CD4-positive, alpha-beta T cell (primary cell): ENCODE measurements at regions of chr5 and their contacts with region 1.

Region 1: GRCh38 chr5:135466178-135467050 is 14.3 kb upstream of the TIFAB start:
- DNase-seq: peak; percentile 35 to 77 (median 48)
- ATAC-seq: peak; percentile 68
- H3K4me3 ChIP-seq: peak overlapping the region; percentile 14
- H3K4me3 Mint-ChIP-seq: peak overlapping the region; percentile 53
- H3K27ac ChIP-seq: no peak overlapping the region
- H3K27ac Mint-ChIP-seq: no peak overlapping the region
- H3K4me1 ChIP-seq: peaks cover 14% of the 10 kb centered on the region
- H3K4me1 Mint-ChIP-seq: peaks cover 11% of the 10 kb centered on the region
- H3K27me3 ChIP-seq: peaks cover 22 to 26% of the 10 kb centered on the region in 2 experiments
- H3K27me3 Mint-ChIP-seq: peaks cover 67% of the 10 kb centered on the region
- CTCF ChIP-seq: peak; percentile 71

Region 2: GRCh38 chr5:135094339-135095051 is 371.9 kb before region 1 on chr5:
- CTCF ChIA-PET with region 1: no interaction called
- POLR2A ChIA-PET with region 1: no interaction called
- intact Hi-C with region 1: no loop called
- DNase-seq: peak in 1 of 14 experiments; percentile 19
- ATAC-seq: no peak
- H3K4me3 ChIP-seq: no peak overlapping the region
- H3K4me3 Mint-ChIP-seq: no peak overlapping the region
- H3K27ac ChIP-seq: no peak overlapping the region
- H3K27ac Mint-ChIP-seq: no peak overlapping the region
- H3K4me1 ChIP-seq: no peaks in the 10 kb centered on the region
- H3K4me1 Mint-ChIP-seq: no peaks in the 10 kb centered on the region
- H3K27me3 ChIP-seq: peaks cover 0 to 10% of the 10 kb centered on the region in 2 experiments
- H3K27me3 Mint-ChIP-seq: peaks cover 20% of the 10 kb centered on the region
- CTCF ChIP-seq: no peak

Region 3: DNA sequence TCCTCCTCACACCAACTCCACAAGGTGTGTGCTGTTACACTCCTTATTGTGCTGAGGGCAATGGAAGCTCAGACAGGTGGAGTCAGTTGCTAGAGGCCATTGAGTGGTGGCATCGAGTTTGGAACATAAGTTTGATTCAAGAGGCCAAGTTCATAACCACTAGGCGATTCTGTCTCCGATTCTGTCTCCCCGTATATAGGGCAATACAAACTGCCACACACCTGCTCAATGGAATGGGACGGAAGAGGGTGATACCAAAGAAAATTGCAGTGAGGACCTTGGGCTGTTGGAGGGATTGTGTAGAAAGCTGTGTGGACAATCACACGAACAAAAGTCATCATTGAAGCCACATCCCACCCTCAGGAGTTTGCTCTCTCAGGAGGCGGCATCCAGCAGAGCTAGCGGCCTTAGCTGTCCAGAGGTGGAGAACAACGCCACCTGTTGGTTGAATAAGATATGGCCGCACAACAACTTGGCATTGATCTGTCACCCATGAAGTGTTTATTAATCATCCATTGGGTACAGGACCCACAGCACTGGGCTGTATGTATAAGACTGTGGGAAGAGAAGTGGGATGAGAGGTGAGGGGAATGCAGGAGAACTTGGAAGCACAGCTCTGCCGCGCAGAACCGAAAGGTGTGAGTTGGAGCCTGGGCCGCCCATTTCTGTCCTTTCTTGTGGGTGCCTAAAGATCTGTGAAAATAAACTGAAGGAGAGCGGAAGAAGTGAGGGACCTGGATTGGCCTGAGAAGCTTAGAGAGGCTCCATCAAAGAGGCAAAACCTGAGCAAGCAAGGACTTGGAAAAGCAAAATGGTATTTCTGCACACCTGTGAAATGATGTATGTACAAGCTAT is 85.4 kb after region 1 on chr5:
- CTCF ChIA-PET with region 1: interaction called, 6 read pairs
- POLR2A ChIA-PET with region 1: interaction called, 3 read pairs
- intact Hi-C with region 1: loop called (anchors 2 to 5 kb)
- DNase-seq: peak; percentile 7 to 71 (median 32)
- ATAC-seq: peak; percentile 41
- H3K4me3 ChIP-seq: no peak overlapping the region
- H3K4me3 Mint-ChIP-seq: no peak overlapping the region
- H3K27ac ChIP-seq: no peak overlapping the region
- H3K27ac Mint-ChIP-seq: no peak overlapping the region
- H3K4me1 ChIP-seq: no peaks in the 10 kb centered on the region
- H3K4me1 Mint-ChIP-seq: no peaks in the 10 kb centered on the region
- H3K27me3 ChIP-seq: peaks cover 10 to 50% of the 10 kb centered on the region in 2 experiments
- H3K27me3 Mint-ChIP-seq: peaks cover 82% of the 10 kb centered on the region
- CTCF ChIP-seq: peak; percentile 66

Region 4: DNA sequence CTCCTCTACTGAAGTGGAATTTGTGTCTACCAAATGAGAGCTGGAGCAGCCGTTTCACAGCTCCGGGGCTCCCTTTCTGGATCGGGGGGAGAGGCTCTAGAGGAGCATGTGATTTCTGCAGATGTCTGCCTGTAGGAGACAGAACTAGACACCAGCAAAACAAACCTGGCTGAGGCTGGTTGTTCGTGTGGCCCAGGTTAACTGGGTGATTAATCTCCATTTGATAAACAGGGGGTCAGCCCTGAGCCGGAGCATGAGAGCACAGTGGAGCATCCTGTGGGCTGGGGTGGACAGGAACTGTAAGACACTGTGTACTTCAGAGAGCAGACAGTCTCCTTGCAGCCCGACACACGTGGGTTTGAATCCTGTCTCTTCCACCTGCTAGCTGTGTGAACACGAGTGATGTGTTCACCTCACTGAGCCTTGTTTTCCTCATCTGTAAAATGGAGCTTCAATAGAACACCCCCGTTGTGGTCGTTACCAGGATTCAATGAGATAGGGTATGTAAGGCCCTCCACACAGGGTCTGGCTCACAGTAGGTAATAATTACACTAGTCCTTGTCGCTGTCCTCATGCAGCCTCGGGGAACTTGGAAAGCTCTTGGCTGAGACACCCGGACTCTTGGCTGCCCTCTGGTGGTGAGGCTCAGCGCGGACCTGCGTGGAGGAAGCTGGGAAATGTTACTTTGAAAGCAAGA is 99.5 kb after region 1 on chr5:
- CTCF ChIA-PET with region 1: interaction called, 11 read pairs
- POLR2A ChIA-PET with region 1: interaction called, 3 read pairs
- intact Hi-C with region 1: loop called in 1 of 2 experiments (anchors 2 kb)
- DNase-seq: peak; percentile 44 to 75 (median 56)
- ATAC-seq: peak; percentile 48
- H3K4me3 ChIP-seq: no peak overlapping the region
- H3K4me3 Mint-ChIP-seq: no peak overlapping the region
- H3K27ac ChIP-seq: no peak overlapping the region
- H3K27ac Mint-ChIP-seq: no peak overlapping the region
- H3K4me1 ChIP-seq: peaks cover 8% of the 10 kb centered on the region
- H3K4me1 Mint-ChIP-seq: peaks cover 2% of the 10 kb centered on the region
- H3K27me3 ChIP-seq: no peaks in the 10 kb centered on the region
- H3K27me3 Mint-ChIP-seq: peaks cover 19% of the 10 kb centered on the region
- CTCF ChIP-seq: peak; percentile 79

Region 5: DNA sequence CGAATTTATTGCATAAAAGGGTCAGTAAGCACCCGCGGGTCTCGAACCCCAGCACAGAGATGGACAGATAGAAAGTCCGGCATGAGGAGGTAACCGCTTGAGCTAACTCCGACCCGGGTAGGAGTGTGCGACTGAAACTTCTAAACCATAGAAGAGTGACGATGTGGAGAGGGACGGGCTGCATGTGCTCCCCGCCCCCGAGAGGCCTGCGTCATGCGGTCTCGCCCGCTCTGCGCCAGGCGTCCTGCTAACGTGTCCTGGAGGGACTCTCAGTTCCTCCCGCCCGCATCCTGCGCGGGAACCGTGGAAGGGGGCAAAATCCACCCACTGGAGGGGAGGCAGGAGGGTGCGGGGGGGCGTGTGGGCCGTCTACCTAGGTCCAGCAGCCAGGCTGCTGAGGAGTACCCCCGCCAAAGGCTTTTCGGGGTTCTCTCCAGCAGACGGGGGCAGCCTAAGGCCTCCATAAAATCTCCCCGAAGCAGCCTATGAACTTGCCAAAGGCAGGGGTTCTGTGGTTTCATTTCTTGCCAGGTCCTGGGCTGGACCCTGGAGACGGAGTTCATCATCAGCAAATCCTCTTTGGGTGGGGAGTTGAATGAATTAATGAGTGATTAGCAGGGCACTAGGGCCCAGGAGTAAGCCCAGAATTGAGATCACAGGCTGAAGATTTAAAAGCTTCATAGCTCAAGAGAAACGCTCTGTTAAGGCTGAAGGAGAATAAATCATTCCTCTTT is 614.2 kb after region 1 on chr5:
- CTCF ChIA-PET with region 1: no interaction called
- POLR2A ChIA-PET with region 1: no interaction called
- intact Hi-C with region 1: loop called in 1 of 2 experiments (anchors 10 kb)
- DNase-seq: peak; percentile 12 to 78 (median 47)
- ATAC-seq: peak; percentile 94
- H3K4me3 ChIP-seq: peak overlapping the region; percentile 29
- H3K4me3 Mint-ChIP-seq: peak overlapping the region; percentile 67
- H3K27ac ChIP-seq: no peak overlapping the region
- H3K27ac Mint-ChIP-seq: no peak overlapping the region
- H3K4me1 ChIP-seq: peaks cover 18% of the 10 kb centered on the region
- H3K4me1 Mint-ChIP-seq: no peaks in the 10 kb centered on the region
- H3K27me3 ChIP-seq: peaks cover 22 to 49% of the 10 kb centered on the region in 2 experiments
- H3K27me3 Mint-ChIP-seq: peaks cover 51% of the 10 kb centered on the region
- CTCF ChIP-seq: no peak

Region 6: GRCh38 chr5:136212252-136212721 is 745.9 kb after region 1 on chr5:
- CTCF ChIA-PET with region 1: no interaction called
- POLR2A ChIA-PET with region 1: no interaction called
- intact Hi-C with region 1: loop called (anchors 5 to 10 kb)
- DNase-seq: peak in 12 of 14 experiments; percentile 7 to 60 (median 22)
- ATAC-seq: no peak
- H3K4me3 ChIP-seq: no peak overlapping the region
- H3K4me3 Mint-ChIP-seq: no peak overlapping the region
- H3K27ac ChIP-seq: no peak overlapping the region
- H3K27ac Mint-ChIP-seq: no peak overlapping the region
- H3K4me1 ChIP-seq: no peaks in the 10 kb centered on the region
- H3K4me1 Mint-ChIP-seq: no peaks in the 10 kb centered on the region
- H3K27me3 ChIP-seq: peaks cover 0 to 4% of the 10 kb centered on the region in 2 experiments
- H3K27me3 Mint-ChIP-seq: peaks cover 27% of the 10 kb centered on the region
- CTCF ChIP-seq: peak; percentile 69